ENCODE measurements at regions of chr1 and their contacts with region 1.

Region 1: GRCh38 chr1:55215256-55216021 is at the start of gene USP24:
- DNase-seq: peak; percentile 81
- H3K4me3 Mint-ChIP-seq: peak within 1 kb of the TSS; percentile 85
- H3K27ac Mint-ChIP-seq: peak within 1 kb of the TSS; percentile 96
- H3K4me1 Mint-ChIP-seq: peaks cover 53% of the 10 kb centered on the region
- H3K27me3 Mint-ChIP-seq: no peaks in the 10 kb centered on the region
- CTCF ChIP-seq: no peak
- total RNA-seq, gene USP24: 38.0 and 45.7 TPM in 2 replicates

Region 2: DNA sequence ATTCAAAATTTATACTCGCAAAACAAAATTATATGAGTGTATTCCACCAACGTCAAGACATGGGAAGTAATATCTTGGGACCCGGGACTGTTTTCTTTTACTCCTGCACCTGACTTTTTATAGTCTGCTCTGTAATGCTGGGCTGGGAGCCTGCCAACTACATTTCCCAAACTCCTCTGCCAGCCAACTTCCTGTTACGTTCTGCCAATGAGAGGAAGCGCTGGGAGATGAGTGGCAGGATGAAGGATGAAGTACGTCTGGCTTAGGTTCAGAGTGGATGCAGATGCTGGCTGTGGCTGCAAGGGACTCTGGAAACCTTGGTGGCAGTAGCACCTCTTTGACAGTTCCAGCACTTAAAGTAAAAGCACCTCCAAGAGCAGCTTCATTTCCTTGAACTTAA is 59.9 kb before region 1 on chr1:
- CTCF ChIA-PET with region 1: no interaction called
- POLR2A ChIA-PET with region 1: no interaction called
- intact Hi-C with region 1: no loop called
- DNase-seq: peak; percentile 30
- H3K4me3 Mint-ChIP-seq: no peak overlapping the region
- H3K27ac Mint-ChIP-seq: no peak overlapping the region
- H3K4me1 Mint-ChIP-seq: no peaks in the 10 kb centered on the region
- H3K27me3 Mint-ChIP-seq: no peaks in the 10 kb centered on the region
- CTCF ChIP-seq: no peak

Region 3: DNA sequence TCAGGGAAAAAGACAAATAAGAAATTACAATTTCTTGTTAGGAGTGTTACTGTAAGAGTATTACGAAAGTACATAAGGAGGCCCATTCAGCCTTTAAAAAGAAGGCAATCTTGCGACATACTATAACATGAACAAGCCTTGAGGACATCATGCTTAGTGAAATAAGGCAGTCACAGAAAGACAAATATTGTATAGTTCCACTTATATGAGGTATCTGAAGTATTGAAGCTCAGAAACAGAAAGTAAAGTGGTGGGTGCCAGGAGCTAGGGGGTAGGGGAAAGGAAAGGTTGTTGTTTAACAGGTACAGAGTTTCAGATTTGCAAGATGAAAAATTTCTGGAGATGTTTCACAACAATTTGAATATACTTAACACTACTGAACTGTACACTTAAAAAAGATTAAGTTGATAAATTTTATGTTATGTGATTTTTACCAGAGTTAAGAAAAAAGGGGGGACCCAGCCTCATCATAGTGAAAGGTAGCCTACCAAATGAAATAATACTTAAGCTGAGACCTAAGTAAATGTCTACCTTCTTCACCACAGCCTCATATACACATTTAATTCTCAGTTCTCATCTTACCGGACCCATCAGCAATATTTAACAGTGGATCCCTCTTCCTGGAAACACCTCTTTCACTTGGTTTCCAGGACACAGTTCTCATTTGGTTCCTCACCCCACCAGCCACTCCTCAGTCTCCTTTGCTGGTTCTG is 19.8 kb before region 1 on chr1:
- CTCF ChIA-PET with region 1: interaction called, 3 read pairs
- POLR2A ChIA-PET with region 1: interaction called, 15 read pairs
- intact Hi-C with region 1: no loop called
- DNase-seq: peak; percentile 73
- H3K4me3 Mint-ChIP-seq: no peak overlapping the region
- H3K27ac Mint-ChIP-seq: peak overlapping the region; percentile 69
- H3K4me1 Mint-ChIP-seq: peaks cover 43% of the 10 kb centered on the region
- H3K27me3 Mint-ChIP-seq: no peaks in the 10 kb centered on the region
- CTCF ChIP-seq: no peak

Region 4: GRCh38 chr1:55230659-55231058 is 15.2 kb after region 1 on chr1:
- CTCF ChIA-PET with region 1: interaction called, 3 read pairs
- POLR2A ChIA-PET with region 1: interaction called, 26 read pairs
- intact Hi-C with region 1: no loop called
- DNase-seq: no peak
- H3K4me3 Mint-ChIP-seq: no peak overlapping the region
- H3K27ac Mint-ChIP-seq: no peak overlapping the region
- H3K4me1 Mint-ChIP-seq: peaks cover 17% of the 10 kb centered on the region
- H3K27me3 Mint-ChIP-seq: no peaks in the 10 kb centered on the region
- CTCF ChIP-seq: no peak

Region 5: DNA sequence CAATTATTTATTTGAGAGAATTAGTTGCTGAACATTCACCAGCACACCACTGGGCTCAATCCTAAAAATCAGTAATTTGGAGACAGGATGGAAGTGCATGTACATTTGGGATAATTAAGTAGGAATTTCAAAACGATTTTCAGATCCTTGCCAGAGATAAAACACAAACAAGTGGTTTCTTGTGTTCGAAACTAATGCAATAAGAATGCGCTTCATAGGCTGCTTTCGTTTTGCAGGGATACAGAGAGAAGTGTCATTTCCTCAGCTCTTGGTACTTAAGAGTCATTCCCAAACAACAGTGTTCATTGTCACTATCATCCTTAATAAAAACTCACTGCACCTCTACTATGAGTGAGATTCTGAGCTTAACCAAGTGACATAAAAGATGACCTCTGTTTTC is 20.3 kb after region 1 on chr1:
- CTCF ChIA-PET with region 1: interaction called, 3 read pairs
- POLR2A ChIA-PET with region 1: interaction called, 26 read pairs
- intact Hi-C with region 1: no loop called
- DNase-seq: peak; percentile 62
- H3K4me3 Mint-ChIP-seq: peak overlapping the region; percentile 59
- H3K27ac Mint-ChIP-seq: peak overlapping the region; percentile 65
- H3K4me1 Mint-ChIP-seq: peaks cover 26% of the 10 kb centered on the region
- H3K27me3 Mint-ChIP-seq: no peaks in the 10 kb centered on the region
- CTCF ChIP-seq: no peak

Region 6: GRCh38 chr1:55244476-55245099 is 29.1 kb after region 1 on chr1:
- CTCF ChIA-PET with region 1: interaction called, 6 read pairs
- POLR2A ChIA-PET with region 1: interaction called, 16 read pairs
- intact Hi-C with region 1: no loop called
- DNase-seq: peak; percentile 27
- H3K4me3 Mint-ChIP-seq: no peak overlapping the region
- H3K27ac Mint-ChIP-seq: peak overlapping the region; percentile 41
- H3K4me1 Mint-ChIP-seq: peaks cover 23% of the 10 kb centered on the region
- H3K27me3 Mint-ChIP-seq: no peaks in the 10 kb centered on the region
- CTCF ChIP-seq: no peak

Region 7: DNA sequence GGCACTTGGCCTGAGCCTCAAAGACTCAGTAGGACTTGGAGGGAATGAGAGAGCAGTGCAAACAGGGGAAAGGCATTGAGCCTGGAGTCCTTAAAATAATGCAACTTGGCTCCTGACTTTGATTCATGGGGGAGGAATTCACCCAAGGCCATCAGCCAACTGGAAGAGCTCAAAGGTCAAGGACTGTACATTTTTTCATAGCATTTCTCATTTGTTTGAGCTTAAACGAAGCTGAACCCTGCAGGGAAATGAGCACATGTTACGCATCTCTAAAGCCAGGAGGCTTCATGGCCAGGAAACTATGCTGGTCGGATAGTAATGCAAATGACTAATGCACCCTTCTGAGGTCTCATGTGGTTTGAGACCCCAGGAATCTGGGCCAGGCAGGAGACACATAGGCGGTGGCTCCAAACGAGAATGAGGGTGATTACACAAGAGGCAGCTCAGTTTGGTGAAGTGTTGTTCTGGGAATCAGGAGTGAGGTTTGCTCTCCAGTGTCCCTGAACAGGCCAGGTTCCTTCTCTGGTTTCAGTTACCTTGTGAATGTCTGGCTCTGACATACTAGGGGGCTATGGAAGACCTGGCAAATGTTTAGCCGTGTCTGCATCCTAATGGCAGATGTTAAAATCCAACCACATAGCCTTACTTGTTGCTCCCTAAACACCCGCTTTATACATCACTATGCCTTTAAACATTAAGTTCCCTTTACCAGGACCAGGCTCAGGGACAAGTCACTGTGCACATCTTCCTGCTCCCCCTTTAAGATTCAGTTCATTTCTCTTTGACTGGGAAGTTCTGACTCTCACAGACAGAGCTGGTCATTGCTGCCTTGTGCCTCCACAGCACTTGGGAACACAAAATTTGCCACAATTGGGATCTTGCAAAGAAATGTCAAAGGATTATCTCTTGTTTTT is 503.6 kb after region 1 on chr1:
- CTCF ChIA-PET with region 1: no interaction called
- POLR2A ChIA-PET with region 1: no interaction called
- intact Hi-C with region 1: no loop called
- DNase-seq: peak; percentile 96
- H3K4me3 Mint-ChIP-seq: no peak overlapping the region
- H3K27ac Mint-ChIP-seq: peak overlapping the region; percentile 84
- H3K4me1 Mint-ChIP-seq: peaks cover 30% of the 10 kb centered on the region
- H3K27me3 Mint-ChIP-seq: no peaks in the 10 kb centered on the region
- CTCF ChIP-seq: no peak

Measured in MCF 10A (cell line).